CD4-positive, alpha-beta T cell (primary cell): ENCODE measurements at regions of chr5 and their contacts with region 1.

Region 1: DNA sequence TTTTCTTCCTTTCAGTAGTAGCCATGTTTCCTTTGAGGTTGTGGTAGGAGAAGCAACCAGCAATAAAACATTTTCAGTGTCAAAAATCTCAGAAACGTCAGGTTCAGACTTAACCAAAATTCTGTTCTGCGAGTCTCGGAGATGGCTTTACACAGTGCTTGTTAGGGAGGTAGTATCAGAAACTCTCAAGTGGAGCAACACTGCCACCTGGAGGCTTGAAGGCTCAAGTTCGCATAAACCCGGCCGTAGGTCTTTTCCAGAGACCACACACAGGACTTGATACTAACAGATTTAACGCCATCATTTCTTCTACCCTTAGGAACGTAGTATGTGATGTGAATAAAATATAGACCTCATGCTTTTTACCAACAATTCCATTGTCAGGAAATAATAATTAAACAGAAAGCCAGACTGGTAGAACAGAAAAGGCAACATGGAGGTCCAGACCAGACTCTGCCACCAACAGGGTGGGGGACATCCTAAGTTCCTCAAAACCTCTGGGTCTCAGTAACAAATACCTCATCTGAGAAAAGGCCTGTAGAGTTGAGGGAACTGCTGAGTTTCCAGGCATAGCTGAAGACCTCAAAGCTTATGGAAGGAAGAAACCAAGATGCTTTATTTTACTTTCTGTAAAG is 8.5 kb downstream of the PTGER4 start:
- DNase-seq: peak; percentile 75 to 94 (median 84)
- ATAC-seq: peak; percentile 75
- H3K4me3 ChIP-seq: peak overlapping the region; percentile 91
- H3K4me3 Mint-ChIP-seq: peak overlapping the region; percentile 99
- H3K27ac ChIP-seq: peak overlapping the region in 1 of 2 donors; percentile 38
- H3K27ac Mint-ChIP-seq: peak overlapping the region; percentile 84
- H3K4me1 ChIP-seq: peaks cover 32% of the 10 kb centered on the region
- H3K4me1 Mint-ChIP-seq: peaks cover 84% of the 10 kb centered on the region
- H3K27me3 ChIP-seq: no peaks in the 10 kb centered on the region
- H3K27me3 Mint-ChIP-seq: no peaks in the 10 kb centered on the region
- CTCF ChIP-seq: peak; percentile 87

Region 2: GRCh38 chr5:39599721-39600431 is 1088.4 kb before region 1 on chr5:
- CTCF ChIA-PET with region 1: no interaction called
- POLR2A ChIA-PET with region 1: no interaction called
- intact Hi-C with region 1: loop called in 1 of 2 experiments (anchors 5 kb)
- DNase-seq: peak in 2 of 14 experiments; percentile 18 to 29
- ATAC-seq: no peak
- H3K4me3 ChIP-seq: no peak overlapping the region
- H3K4me3 Mint-ChIP-seq: no peak overlapping the region
- H3K27ac ChIP-seq: no peak overlapping the region
- H3K27ac Mint-ChIP-seq: no peak overlapping the region
- H3K4me1 ChIP-seq: no peaks in the 10 kb centered on the region
- H3K4me1 Mint-ChIP-seq: no peaks in the 10 kb centered on the region
- H3K27me3 ChIP-seq: peaks cover 5 to 25% of the 10 kb centered on the region in 2 experiments
- H3K27me3 Mint-ChIP-seq: peaks cover 46% of the 10 kb centered on the region
- CTCF ChIP-seq: peak; percentile 66

Region 3: GRCh38 chr5:40021007-40021406 is 667.2 kb before region 1 on chr5:
- CTCF ChIA-PET with region 1: no interaction called
- POLR2A ChIA-PET with region 1: no interaction called
- intact Hi-C with region 1: loop called (anchors 5 kb)
- DNase-seq: peak in 3 of 14 experiments; percentile 11 to 27 (median 17)
- ATAC-seq: no peak
- H3K4me3 ChIP-seq: no peak overlapping the region
- H3K4me3 Mint-ChIP-seq: no peak overlapping the region
- H3K27ac ChIP-seq: no peak overlapping the region
- H3K27ac Mint-ChIP-seq: no peak overlapping the region
- H3K4me1 ChIP-seq: no peaks in the 10 kb centered on the region
- H3K4me1 Mint-ChIP-seq: no peaks in the 10 kb centered on the region
- H3K27me3 ChIP-seq: no peaks in the 10 kb centered on the region
- H3K27me3 Mint-ChIP-seq: no peaks in the 10 kb centered on the region
- CTCF ChIP-seq: no peak

Region 4: DNA sequence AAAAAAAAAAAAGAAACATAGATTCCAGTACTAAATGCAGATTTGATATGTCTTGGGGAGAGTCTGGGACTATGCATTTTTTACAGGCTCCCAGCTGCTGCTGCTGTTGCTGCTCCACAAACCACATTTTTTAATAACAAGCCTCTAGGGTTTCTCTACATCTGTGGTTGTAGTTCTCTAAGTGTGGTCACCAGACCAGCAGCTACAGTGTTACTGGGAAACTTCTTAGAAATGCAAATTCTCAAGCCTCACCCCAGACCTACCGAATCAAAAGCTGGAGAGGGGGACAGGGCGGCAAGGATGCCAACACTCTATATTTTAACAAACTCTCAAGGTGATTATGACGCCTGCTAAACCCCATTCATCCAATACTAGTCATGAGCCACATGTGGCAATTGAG is 302.0 kb before region 1 on chr5:
- CTCF ChIA-PET with region 1: no interaction called
- POLR2A ChIA-PET with region 1: no interaction called
- intact Hi-C with region 1: loop called in 1 of 2 experiments (anchors 5 kb)
- DNase-seq: peak in 4 of 14 experiments; percentile 9 to 76 (median 61)
- ATAC-seq: peak; percentile 62
- H3K4me3 ChIP-seq: no peak overlapping the region
- H3K4me3 Mint-ChIP-seq: no peak overlapping the region
- H3K27ac ChIP-seq: peak overlapping the region in 1 of 2 donors; percentile 33
- H3K27ac Mint-ChIP-seq: peak overlapping the region; percentile 65
- H3K4me1 ChIP-seq: peaks cover 45% of the 10 kb centered on the region
- H3K4me1 Mint-ChIP-seq: peaks cover 82% of the 10 kb centered on the region
- H3K27me3 ChIP-seq: no peaks in the 10 kb centered on the region
- H3K27me3 Mint-ChIP-seq: no peaks in the 10 kb centered on the region
- CTCF ChIP-seq: no peak

Region 5: GRCh38 chr5:40503439-40503838 is 184.8 kb before region 1 on chr5:
- CTCF ChIA-PET with region 1: no interaction called
- POLR2A ChIA-PET with region 1: no interaction called
- intact Hi-C with region 1: loop called (anchors 1 to 2 kb)
- DNase-seq: peak in 2 of 14 experiments; percentile 16 to 30
- ATAC-seq: peak; percentile 41
- H3K4me3 ChIP-seq: no peak overlapping the region
- H3K4me3 Mint-ChIP-seq: no peak overlapping the region
- H3K27ac ChIP-seq: no peak overlapping the region
- H3K27ac Mint-ChIP-seq: no peak overlapping the region
- H3K4me1 ChIP-seq: peaks cover 3% of the 10 kb centered on the region
- H3K4me1 Mint-ChIP-seq: peaks cover 6% of the 10 kb centered on the region
- H3K27me3 ChIP-seq: no peaks in the 10 kb centered on the region
- H3K27me3 Mint-ChIP-seq: no peaks in the 10 kb centered on the region
- CTCF ChIP-seq: no peak

Region 6: GRCh38 chr5:40834849-40835787 is 146.9 kb after region 1 on chr5 and contains the start of gene RPL37:
- CTCF ChIA-PET with region 1: no interaction called
- POLR2A ChIA-PET with region 1: interaction called, 4 read pairs
- intact Hi-C with region 1: loop called in 1 of 2 experiments (anchors 5 kb)
- DNase-seq: peak; percentile 84 to 96 (median 88)
- ATAC-seq: peak; percentile 82
- H3K4me3 ChIP-seq: peak within 1 kb of the TSS; percentile 84
- H3K4me3 Mint-ChIP-seq: peak within 1 kb of the TSS; percentile 95
- H3K27ac ChIP-seq: peak within 1 kb of the TSS; percentile 92 to 94
- H3K27ac Mint-ChIP-seq: peak within 1 kb of the TSS; percentile 97
- H3K4me1 ChIP-seq: peaks cover 45% of the 10 kb centered on the region
- H3K4me1 Mint-ChIP-seq: peaks cover 56% of the 10 kb centered on the region
- H3K27me3 ChIP-seq: no peaks in the 10 kb centered on the region
- H3K27me3 Mint-ChIP-seq: no peaks in the 10 kb centered on the region
- CTCF ChIP-seq: no peak
- total RNA-seq, gene RPL37: 2,845 to 2,986 TPM

Region 7: GRCh38 chr5:41102341-41102740 is 414.1 kb after region 1 on chr5:
- CTCF ChIA-PET with region 1: no interaction called
- POLR2A ChIA-PET with region 1: no interaction called
- intact Hi-C with region 1: no loop called
- DNase-seq: no peak
- ATAC-seq: no peak
- H3K4me3 ChIP-seq: no peak overlapping the region
- H3K4me3 Mint-ChIP-seq: no peak overlapping the region
- H3K27ac ChIP-seq: no peak overlapping the region
- H3K27ac Mint-ChIP-seq: no peak overlapping the region
- H3K4me1 ChIP-seq: no peaks in the 10 kb centered on the region
- H3K4me1 Mint-ChIP-seq: no peaks in the 10 kb centered on the region
- H3K27me3 ChIP-seq: no peaks in the 10 kb centered on the region
- H3K27me3 Mint-ChIP-seq: no peaks in the 10 kb centered on the region
- CTCF ChIP-seq: no peak